CD8-positive, alpha-beta memory T cell (primary cell): ENCODE measurements at regions of chr12 and their contacts with region 1.

Region 1: DNA sequence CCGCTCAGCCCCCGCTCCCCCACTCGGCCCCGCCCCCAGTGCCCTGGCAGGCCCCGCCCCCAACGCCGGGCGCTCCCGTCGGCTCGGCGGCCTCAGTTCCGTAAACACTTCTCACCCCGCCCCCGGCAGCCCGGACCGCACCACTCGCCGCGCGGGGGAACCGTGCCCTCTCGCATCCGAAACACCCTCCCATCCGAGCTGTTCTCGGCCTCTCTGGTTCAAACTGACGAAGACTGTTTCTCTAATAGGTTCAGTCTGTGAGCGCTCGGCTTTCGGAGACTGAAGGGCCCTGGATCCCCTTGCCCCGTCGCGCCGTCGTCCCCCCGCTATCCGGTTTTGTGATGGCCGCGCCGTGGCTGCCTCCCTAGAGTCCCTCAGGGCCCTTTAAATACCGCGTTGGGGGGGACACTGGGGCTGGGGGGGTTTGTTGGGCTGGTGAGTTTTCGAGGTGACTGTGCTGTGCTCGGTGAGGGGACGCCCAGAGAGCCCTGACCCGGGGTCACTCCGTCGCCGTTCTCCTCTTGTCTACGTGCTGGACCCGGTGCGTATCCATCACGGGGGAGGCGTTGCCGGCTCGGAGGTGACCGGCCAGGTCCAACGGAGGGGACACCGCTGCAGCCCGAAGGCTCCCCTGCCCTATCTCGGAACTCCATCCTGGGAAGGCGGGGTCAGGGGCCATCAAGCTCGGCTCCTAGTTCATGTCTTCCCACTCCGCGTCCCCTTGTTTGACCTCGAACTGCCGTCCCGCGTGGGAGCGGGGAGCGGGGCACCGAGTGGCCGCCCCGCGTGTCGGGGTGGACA is at the start of gene TCP11L2:
- DNase-seq: peak; percentile 85 to 95 (median 90)
- H3K4me3 ChIP-seq: peak within 1 kb of the TSS; percentile 88
- H3K4me3 Mint-ChIP-seq: peak within 1 kb of the TSS; percentile 82 to 98 (median 96)
- H3K27ac ChIP-seq: peak within 1 kb of the TSS; percentile 98
- H3K27ac Mint-ChIP-seq: peak within 1 kb of the TSS; percentile 96 to 100 (median 100)
- H3K4me1 ChIP-seq: peaks cover 59% of the 10 kb centered on the region
- H3K4me1 Mint-ChIP-seq: peaks cover 55 to 61% (median 61%) of the 10 kb centered on the region in 3 donors
- H3K27me3 ChIP-seq: no peaks in the 10 kb centered on the region
- H3K27me3 Mint-ChIP-seq: peaks cover 0 to 8% of the 10 kb centered on the region in 2 donors
- total RNA-seq, gene TCP11L2: 11.8 to 13.0 TPM

Region 2: DNA sequence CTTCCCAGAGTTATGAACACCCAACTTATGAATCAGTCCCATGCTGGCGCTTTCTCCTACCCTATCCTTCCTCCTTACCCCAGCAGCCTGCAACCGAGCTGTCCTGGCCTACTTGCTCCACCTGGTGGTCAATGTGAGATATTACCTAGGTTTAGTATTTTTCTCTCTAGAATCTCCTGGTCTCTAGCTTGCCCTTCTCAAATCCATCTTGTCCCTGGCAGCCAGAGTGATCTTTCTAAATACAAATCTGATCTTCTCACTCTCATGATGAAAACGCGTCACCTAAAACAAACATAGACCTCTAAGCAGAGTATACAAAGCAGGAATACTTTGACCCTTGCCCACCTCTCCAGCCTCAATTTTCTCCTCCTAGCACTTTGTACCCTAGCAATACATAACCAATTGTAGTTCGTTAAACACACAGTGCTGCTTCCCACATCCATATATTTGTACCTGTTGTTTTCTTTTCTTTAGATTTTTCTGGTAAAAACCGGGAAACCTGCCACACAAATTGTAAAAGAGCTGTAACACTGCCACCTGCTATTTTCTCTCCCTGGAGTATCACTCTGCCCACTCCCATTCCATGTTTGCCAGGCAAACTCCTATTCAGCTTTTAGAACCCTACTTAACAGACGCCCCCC is 20.0 kb before region 1 on chr12:
- CTCF ChIA-PET with region 1: interaction called, 16 read pairs
- POLR2A ChIA-PET with region 1: interaction called, 3 read pairs
- DNase-seq: peak in 4 of 5 donors; percentile 17 to 63 (median 46)
- H3K4me3 ChIP-seq: no peak overlapping the region
- H3K4me3 Mint-ChIP-seq: no peak overlapping the region
- H3K27ac ChIP-seq: no peak overlapping the region
- H3K27ac Mint-ChIP-seq: peak overlapping the region in 1 of 8 donors; percentile 25
- H3K4me1 ChIP-seq: no peaks in the 10 kb centered on the region
- H3K4me1 Mint-ChIP-seq: no peaks in the 10 kb centered on the region
- H3K27me3 ChIP-seq: no peaks in the 10 kb centered on the region
- H3K27me3 Mint-ChIP-seq: peaks cover 15 to 41% of the 10 kb centered on the region in 2 donors

Region 3: DNA sequence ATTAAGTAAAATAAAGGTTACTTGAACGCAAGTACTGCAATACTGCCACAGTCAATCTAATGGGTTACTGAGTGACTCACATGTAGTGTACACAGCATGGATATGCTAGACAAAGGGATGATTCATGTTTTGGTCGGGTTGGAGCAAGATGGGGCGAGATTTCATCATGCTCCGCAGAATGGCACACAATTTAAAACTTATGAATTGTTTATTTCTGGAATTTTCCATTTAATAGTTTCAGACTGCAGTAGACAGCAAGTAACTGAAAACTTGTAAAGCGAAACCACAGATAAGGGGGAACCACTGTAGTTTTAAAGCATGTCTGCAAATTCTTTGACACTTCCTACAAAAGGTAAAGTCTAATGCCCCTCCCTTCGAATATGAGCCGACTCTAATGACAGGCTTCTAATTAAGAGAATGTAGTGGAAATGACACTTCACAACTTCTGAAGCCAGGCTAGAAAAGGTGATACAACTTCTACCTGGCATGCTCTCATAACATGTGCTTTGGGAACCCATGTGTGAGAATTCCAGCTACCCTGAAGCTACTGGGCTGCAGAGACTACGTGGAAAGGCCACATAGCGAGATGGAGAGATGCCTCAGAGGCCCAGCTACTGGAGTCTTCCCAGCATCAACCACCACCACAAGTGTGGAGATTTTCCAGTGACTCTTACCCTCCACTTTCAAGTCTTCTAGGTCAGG is 14.0 kb before region 1 on chr12:
- CTCF ChIA-PET with region 1: interaction called, 16 read pairs
- POLR2A ChIA-PET with region 1: no interaction called
- DNase-seq: no peak
- H3K4me3 ChIP-seq: no peak overlapping the region
- H3K4me3 Mint-ChIP-seq: no peak overlapping the region
- H3K27ac ChIP-seq: no peak overlapping the region
- H3K27ac Mint-ChIP-seq: no peak overlapping the region
- H3K4me1 ChIP-seq: no peaks in the 10 kb centered on the region
- H3K4me1 Mint-ChIP-seq: no peaks in the 10 kb centered on the region
- H3K27me3 ChIP-seq: no peaks in the 10 kb centered on the region
- H3K27me3 Mint-ChIP-seq: peaks cover 10 to 41% of the 10 kb centered on the region in 2 donors

Region 4: DNA sequence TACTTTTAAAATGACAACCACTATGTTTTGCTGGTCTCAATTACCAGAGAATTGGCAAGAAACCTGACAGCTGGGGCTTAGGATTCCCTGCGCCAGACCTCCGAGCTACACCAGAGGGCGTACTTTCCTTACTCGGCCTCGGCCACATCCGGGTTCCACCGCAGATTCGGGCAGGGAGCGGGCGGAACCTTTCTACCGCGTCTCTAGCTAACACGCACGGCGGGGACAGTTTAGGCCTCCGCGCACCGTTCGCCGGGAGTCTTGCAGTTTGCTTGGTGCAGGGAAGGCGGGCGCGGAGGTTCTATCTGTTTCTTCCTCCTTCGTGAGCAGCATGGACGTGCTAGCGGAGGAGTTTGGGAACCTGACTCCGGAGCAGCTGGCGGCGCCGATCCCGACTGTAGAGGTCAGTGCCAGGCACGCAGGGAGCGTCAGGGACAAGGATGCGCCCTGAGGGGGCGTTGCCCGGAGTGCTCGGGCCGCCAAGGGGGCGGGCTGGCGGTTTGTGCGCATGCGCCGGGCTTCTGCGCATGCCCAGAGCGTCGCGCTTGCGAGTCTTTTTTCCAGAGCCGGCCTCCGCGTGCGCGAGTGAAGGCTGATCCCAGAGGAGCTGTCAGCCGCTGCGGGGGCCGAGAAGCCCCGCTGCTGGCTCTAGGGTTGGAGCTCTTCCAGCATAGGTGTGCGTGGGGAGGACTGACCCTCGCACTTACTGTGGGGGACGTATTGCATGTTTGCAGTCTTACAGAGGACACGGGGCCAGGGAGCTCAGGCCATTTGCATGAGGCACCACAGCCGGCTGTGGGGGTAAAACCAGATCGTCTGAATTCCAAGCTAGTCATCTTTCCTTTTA is 55.2 kb after region 1 on chr12 and contains the start of gene POLR3B:
- CTCF ChIA-PET with region 1: interaction called, 19 read pairs
- POLR2A ChIA-PET with region 1: interaction called, 15 read pairs
- DNase-seq: peak; percentile 92 to 98 (median 96)
- H3K4me3 ChIP-seq: peak within 1 kb of the TSS; percentile 93
- H3K4me3 Mint-ChIP-seq: peak within 1 kb of the TSS; percentile 85 to 95 (median 94)
- H3K27ac ChIP-seq: peak within 1 kb of the TSS; percentile 80
- H3K27ac Mint-ChIP-seq: peak within 1 kb of the TSS; percentile 77 to 97 (median 92)
- H3K4me1 ChIP-seq: peaks cover 15% of the 10 kb centered on the region
- H3K4me1 Mint-ChIP-seq: peaks cover 16 to 19% (median 16%) of the 10 kb centered on the region in 3 donors
- H3K27me3 ChIP-seq: no peaks in the 10 kb centered on the region
- H3K27me3 Mint-ChIP-seq: no peaks in the 10 kb centered on the region
- total RNA-seq, gene POLR3B: 13.4 to 14.6 TPM

Region 5: DNA sequence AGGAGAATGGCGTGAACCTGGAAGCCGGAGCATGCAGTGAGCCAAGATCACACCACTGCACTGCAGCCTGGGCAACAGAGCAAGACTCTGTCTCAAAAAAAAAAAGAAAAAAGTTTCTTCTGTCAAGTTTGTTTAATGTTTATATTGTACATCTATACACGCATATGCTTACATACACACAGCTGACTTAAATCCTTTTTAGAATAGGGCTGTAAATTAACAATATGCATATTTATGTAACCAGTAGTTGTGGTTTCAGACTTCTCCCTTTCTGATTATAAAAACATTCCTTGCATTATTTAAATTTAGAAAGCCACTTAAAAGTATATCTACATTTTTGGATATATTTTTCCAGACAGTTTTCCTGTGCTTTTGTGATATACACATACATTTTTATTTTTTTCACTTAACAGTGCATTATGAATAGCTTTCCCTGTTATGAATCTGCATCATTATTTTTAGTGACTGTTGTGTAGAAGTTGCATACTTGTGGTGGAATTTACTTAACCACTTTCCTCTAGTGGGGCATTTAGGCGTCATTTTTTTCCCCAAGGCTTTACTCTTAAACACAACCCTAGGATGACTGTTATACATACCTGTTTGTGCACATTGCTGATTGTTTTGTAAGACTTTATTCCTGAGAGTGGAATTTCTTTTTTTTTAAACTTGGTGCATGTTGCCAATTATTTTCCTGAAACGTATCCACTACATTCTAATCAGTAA is 84.4 kb after region 1 on chr12:
- CTCF ChIA-PET with region 1: no interaction called
- POLR2A ChIA-PET with region 1: no interaction called
- DNase-seq: no peak
- H3K4me3 ChIP-seq: no peak overlapping the region
- H3K4me3 Mint-ChIP-seq: no peak overlapping the region
- H3K27ac ChIP-seq: no peak overlapping the region
- H3K27ac Mint-ChIP-seq: no peak overlapping the region
- H3K4me1 ChIP-seq: no peaks in the 10 kb centered on the region
- H3K4me1 Mint-ChIP-seq: no peaks in the 10 kb centered on the region
- H3K27me3 ChIP-seq: no peaks in the 10 kb centered on the region
- H3K27me3 Mint-ChIP-seq: no peaks in the 10 kb centered on the region